ENCODE measurements at regions of chr22 and their contacts with region 1.

Region 1: DNA sequence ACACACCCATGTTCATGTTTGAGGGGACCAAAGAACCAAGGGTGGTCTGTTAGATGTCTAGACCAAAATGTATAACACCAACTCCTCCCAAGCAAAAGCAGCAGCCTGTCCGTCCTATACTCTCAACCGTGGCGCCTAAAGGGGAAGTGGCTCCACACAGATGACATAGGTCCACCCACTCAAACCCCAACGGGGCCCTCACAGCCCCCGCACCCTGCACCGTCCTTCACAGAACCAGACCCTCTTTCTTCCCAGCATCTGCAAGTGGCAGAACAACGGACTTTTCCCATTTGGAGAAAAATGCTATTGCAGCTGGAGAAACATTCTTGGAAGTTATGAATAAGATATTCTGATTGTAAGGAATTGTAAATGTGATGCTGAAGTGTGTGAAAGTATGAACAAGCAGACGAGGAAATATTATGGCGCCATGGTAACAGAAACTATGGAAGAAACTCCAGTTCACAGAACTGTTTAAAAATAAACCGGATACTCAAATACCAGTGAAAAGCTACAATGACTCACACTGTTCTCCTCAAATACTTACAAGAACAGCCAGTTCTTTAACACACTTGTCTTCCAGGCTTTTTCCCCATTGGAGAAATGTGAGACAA is 76.5 kb upstream of the ARFGAP3 start:
- DNase-seq: peak; percentile 71
- ATAC-seq: peak; percentile 74
- H3K4me3 ChIP-seq: peak overlapping the region; percentile 74
- H3K27ac ChIP-seq: peak overlapping the region; percentile 99
- H3K4me1 ChIP-seq: peaks cover 81% of the 10 kb centered on the region
- H3K27me3 ChIP-seq: no peaks in the 10 kb centered on the region
- CTCF ChIP-seq: no peak
- EP300 ChIP-seq: peak; percentile 88 to 91
- POLR2A ChIP-seq: peak; percentile 67
- RAD21 ChIP-seq: no peak

Region 2: DNA sequence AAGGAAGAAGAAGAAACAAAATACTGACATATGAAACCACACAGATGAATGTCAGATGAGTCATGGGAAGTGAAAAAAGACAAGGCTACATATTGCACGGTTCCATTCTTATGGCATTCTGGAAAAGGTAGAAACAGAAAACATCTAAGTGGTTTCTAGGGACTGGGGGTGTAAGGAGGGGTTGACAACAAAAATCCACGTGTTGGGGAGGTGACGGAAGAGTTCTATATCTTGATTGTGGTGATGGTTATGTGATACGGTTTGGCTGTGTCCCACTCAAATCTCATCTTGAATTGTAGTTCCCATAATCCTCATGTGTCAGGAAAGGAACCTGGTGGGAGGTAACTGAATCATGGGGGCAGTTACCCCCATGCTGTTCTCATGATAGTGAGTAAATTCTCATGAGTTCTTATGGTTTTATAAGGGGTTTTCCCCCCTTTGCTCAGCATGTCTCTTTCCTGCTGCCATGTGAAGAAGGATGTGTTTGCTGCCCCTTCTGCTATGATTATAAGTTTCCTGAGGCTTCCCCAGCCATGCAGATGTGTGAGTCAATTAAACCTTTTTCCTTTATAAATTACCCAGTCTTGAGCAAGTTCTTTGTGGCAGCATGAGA is 70.1 kb before region 1 on chr22:
- CTCF ChIA-PET with region 1: interaction called, 16 read pairs
- POLR2A ChIA-PET with region 1: no interaction called
- RAD21 ChIA-PET with region 1: interaction called, 10 read pairs
- SMC1A ChIA-PET with region 1: interaction called, 8 read pairs
- in situ Hi-C with region 1: no loop called
- intact Hi-C with region 1: no loop called
- DNase-seq: peak; percentile 46
- ATAC-seq: peak; percentile 16; the same call in 2 of the 3 replicates
- H3K4me3 ChIP-seq: no peak overlapping the region
- H3K27ac ChIP-seq: peak overlapping the region; percentile 24; the same call in 1 of the 2 replicates
- H3K4me1 ChIP-seq: peaks cover 9% of the 10 kb centered on the region
- H3K27me3 ChIP-seq: no peaks in the 10 kb centered on the region
- CTCF ChIP-seq: no peak
- EP300 ChIP-seq: no peak
- POLR2A ChIP-seq: no peak
- RAD21 ChIP-seq: no peak

Region 3: GRCh38 chr22:42895087-42895486 is 38.5 kb before region 1 on chr22:
- CTCF ChIA-PET with region 1: interaction called, 15 read pairs
- POLR2A ChIA-PET with region 1: interaction called, 15 read pairs
- RAD21 ChIA-PET with region 1: interaction called, 15 read pairs
- SMC1A ChIA-PET with region 1: interaction called, 18 read pairs
- in situ Hi-C with region 1: no loop called
- intact Hi-C with region 1: no loop called
- DNase-seq: peak; percentile 76
- ATAC-seq: peak; percentile 81
- H3K4me3 ChIP-seq: no peak overlapping the region
- H3K27ac ChIP-seq: peak overlapping the region; percentile 69
- H3K4me1 ChIP-seq: peaks cover 68% of the 10 kb centered on the region
- H3K27me3 ChIP-seq: no peaks in the 10 kb centered on the region
- CTCF ChIP-seq: no peak
- EP300 ChIP-seq: no peak
- POLR2A ChIP-seq: no peak
- RAD21 ChIP-seq: no peak

Region 4: GRCh38 chr22:42967933-42968332 is 34.3 kb after region 1 on chr22:
- CTCF ChIA-PET with region 1: interaction called, 6 read pairs
- POLR2A ChIA-PET with region 1: interaction called, 4 read pairs
- RAD21 ChIA-PET with region 1: interaction called, 8 read pairs
- SMC1A ChIA-PET with region 1: interaction called, 20 read pairs
- in situ Hi-C with region 1: no loop called
- intact Hi-C with region 1: loop called (anchors 2 kb)
- DNase-seq: no peak
- ATAC-seq: peak; percentile 82
- H3K4me3 ChIP-seq: no peak overlapping the region
- H3K27ac ChIP-seq: no peak overlapping the region
- H3K4me1 ChIP-seq: peaks cover 24% of the 10 kb centered on the region
- H3K27me3 ChIP-seq: no peaks in the 10 kb centered on the region
- CTCF ChIP-seq: peak; percentile 48 to 86 (median 61)
- EP300 ChIP-seq: no peak
- POLR2A ChIP-seq: no peak
- RAD21 ChIP-seq: peak; percentile 56

Region 5: GRCh38 chr22:43036282-43036829 is 102.8 kb after region 1 on chr22:
- CTCF ChIA-PET with region 1: interaction called, 7 read pairs
- POLR2A ChIA-PET with region 1: no interaction called
- RAD21 ChIA-PET with region 1: interaction called, 10 read pairs
- SMC1A ChIA-PET with region 1: interaction called, 5 read pairs
- in situ Hi-C with region 1: no loop called
- intact Hi-C with region 1: no loop called
- DNase-seq: no peak
- ATAC-seq: no peak
- H3K4me3 ChIP-seq: no peak overlapping the region
- H3K27ac ChIP-seq: no peak overlapping the region
- H3K4me1 ChIP-seq: no peaks in the 10 kb centered on the region
- H3K27me3 ChIP-seq: no peaks in the 10 kb centered on the region
- CTCF ChIP-seq: no peak
- EP300 ChIP-seq: no peak
- POLR2A ChIP-seq: no peak
- RAD21 ChIP-seq: no peak

Measured in GM12878 (cell line).